Mucosa of descending colon (tissue), 3 donors: ENCODE measurements at regions of chr12 and their contacts with region 1.

Region 1: GRCh38 chr12:12376646-12377448 is 20.0 kb downstream of the BORCS5 start:
- DNase-seq: no peak
- ATAC-seq: peak; percentile 83
- H3K4me3 ChIP-seq: no peak overlapping the region
- H3K4me1 ChIP-seq: peaks cover 17% of the 10 kb centered on the region
- CTCF ChIP-seq: peak; percentile 28

Region 2: DNA sequence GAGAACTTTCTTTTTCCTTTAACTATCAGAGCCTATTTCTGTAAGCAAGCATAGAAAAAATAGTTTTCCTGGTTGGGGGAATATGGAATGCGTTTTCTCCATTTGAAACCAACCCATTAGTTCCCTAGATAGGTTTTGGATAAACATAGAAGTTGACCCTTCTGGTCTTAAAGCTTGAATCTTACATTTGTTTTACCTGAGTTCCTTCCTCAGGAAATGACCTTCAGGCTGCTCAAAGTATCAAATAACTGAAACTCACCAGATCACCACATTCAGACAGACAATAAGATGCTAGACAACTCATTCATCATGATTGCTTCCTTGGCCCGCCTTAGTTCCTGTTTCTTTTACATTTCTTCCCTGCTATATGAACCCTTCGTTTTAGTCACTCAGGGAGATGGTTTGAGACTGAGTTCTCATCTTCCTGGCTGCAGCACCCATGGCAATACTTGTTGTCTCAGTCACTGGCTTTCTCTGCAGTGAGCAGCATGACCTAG is 162.2 kb before region 1 on chr12:
- intact Hi-C with region 1: no loop called
- DNase-seq: no peak
- ATAC-seq: peak; percentile 21
- H3K4me3 ChIP-seq: no peak overlapping the region
- H3K4me1 ChIP-seq: peaks cover 13% of the 10 kb centered on the region
- CTCF ChIP-seq: no peak

Region 3: GRCh38 chr12:12548713-12549112 is 171.9 kb after region 1 on chr12:
- intact Hi-C with region 1: no loop called
- DNase-seq: no peak
- ATAC-seq: no peak
- H3K4me3 ChIP-seq: no peak overlapping the region
- H3K4me1 ChIP-seq: no peaks in the 10 kb centered on the region
- CTCF ChIP-seq: no peak

Region 4: GRCh38 chr12:12562585-12563261 is 185.9 kb after region 1 on chr12 and contains the start of gene DUSP16:
- intact Hi-C with region 1: loop called in 1 of 2 experiments (anchors 10 kb)
- DNase-seq: peak; percentile 91 to 95 (median 94)
- ATAC-seq: peak; percentile 91
- H3K4me3 ChIP-seq: peak within 1 kb of the TSS; percentile 92
- H3K4me1 ChIP-seq: peaks cover 16% of the 10 kb centered on the region
- CTCF ChIP-seq: no peak
- total RNA-seq, gene DUSP16: 42.3 to 61.8 (median 42.9) TPM

Region 5: DNA sequence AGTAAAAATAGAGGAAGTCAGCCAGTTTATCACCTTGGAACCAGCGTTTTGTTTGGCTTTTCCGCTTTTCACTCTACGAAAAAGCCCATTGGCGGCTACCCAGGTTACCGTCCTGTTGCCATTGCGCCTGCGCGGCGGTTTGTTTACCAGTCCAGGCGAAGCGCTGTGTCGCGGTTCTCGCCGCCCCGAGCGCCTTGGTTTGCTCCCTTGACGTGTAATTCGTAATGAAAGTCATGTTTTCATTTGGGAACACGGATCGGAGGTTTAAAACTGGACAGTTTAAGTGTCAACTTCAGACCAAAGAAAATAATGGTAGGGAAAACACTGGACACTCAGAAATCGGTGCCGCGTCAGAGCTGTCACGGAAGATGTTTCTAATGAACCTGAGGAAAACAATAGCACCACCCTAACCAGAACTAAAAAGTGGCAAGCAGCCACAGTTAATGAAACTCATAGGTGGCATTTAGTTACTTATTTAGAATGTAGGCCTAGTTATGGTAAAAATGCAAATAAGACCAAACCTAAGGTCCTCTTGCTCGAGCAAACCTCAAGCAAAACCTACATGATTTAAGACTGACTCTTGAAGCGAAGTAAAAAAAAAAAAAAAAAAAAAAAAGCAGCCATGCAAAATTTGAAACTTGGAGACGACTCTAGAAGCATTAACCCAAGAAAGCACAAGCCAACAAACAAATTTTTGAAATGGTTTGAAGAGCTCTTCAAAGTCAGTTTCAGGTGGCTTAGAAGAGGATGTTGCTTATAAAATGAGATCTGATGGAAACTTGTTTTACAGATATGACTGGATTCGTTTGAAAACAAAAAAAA is 319.9 kb after region 1 on chr12:
- intact Hi-C with region 1: loop called (anchors 10 kb)
- DNase-seq: peak; percentile 92 to 96 (median 94)
- ATAC-seq: peak; percentile 94
- H3K4me3 ChIP-seq: peak overlapping the region; percentile 26
- H3K4me1 ChIP-seq: no peaks in the 10 kb centered on the region
- CTCF ChIP-seq: no peak

Region 6: DNA sequence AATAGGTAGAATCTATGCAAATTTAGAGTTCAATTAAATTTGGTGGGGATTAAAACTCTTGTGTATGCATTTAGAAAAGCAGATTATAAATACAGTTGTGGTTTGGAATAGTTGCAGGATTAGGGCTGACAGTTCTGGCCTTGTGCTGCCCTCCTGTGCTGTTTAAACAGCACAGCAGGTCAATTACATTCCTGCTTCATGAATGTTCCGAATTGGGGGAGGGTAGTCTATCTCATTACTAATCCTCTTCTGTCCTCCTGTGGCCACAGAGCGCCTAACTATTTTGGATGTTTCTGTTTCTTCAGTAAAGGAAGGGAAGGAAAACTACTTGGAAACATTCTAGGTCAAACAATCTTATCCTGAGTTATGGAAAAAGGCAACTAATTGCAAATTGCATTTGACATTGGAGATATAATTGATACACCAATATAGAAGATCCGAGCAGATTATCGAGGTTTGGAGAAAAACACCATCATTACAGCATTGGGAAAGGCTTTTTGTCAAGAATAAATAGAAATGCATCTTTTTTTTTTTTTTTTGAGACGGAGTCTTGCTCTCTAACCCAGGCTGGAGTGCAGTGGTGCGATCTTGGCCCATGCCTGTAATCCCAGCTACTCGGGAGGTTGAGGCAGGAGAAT is 327.9 kb after region 1 on chr12:
- intact Hi-C with region 1: loop called (anchors 10 kb)
- DNase-seq: peak in 1 of 3 donors; percentile 73
- ATAC-seq: peak; percentile 91
- H3K4me3 ChIP-seq: no peak overlapping the region
- H3K4me1 ChIP-seq: peaks cover 11% of the 10 kb centered on the region
- CTCF ChIP-seq: peak; percentile 45